Endothelial cell of umbilical vein (primary cell): ENCODE measurements at regions of chr22 and their contacts with region 1.

Region 1: GRCh38 chr22:49930739-49931412 is 12.4 kb downstream of the CRELD2 start:
- DNase-seq: peak; percentile 96
- H3K4me3 ChIP-seq: no peak overlapping the region
- H3K27ac ChIP-seq: peak overlapping the region; percentile 74
- H3K4me1 ChIP-seq: peaks cover 39% of the 10 kb centered on the region
- H3K27me3 ChIP-seq: no peaks in the 10 kb centered on the region
- CTCF ChIP-seq: peak; percentile 66 to 75
- POLR2A ChIP-seq: peak; percentile 57

Region 2: DNA sequence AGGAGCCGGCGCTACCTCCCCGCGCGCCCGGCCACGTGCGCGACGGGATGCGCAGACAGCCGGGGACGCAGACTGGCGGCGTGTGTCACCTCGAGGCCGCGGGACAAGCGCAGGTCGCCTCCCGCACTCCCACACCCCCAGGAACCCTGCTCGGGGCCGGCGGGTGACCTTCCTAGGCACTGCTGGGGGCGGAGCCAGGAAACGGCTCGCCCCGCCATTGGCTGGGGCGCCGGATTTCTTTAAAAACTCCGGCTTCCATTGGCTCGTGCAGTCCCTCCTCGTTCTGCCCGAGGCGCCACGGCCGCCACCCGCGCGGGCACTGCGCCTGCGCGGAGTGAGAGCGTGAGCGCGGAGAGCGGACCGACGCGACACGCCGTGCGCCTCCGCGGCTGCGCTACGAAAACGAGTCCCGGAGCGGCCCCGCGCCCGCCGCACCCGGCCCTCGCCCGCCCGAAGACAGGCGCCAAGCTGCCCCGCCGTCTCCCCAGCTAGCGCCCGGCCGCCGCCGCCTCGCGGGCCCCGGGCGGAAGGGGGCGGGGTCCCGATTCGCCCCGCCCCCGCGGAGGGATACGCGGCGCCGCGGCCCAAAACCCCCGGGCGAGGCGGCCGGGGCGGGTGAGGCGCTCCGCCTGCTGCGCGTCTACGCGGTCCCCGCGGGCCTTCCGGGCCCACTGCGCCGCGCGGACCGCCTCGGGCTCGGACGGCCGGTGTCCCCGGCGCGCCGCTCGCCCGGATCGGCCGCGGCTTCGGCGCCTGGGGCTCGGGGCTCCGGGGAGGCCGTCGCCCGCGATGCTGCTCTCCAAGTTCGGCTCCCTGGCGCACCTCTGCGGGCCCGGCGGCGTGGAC is 29.5 kb after region 1 on chr22 and contains the start of gene PIM3:
- CTCF ChIA-PET with region 1: interaction called, 32 read pairs
- POLR2A ChIA-PET with region 1: interaction called, 14 read pairs
- dilution Hi-C with region 1: no loop called
- intact Hi-C with region 1: loop called (anchors 1 kb)
- DNase-seq: peak; percentile 97
- H3K4me3 ChIP-seq: peak within 1 kb of the TSS; percentile 52 to 80 (median 59)
- H3K27ac ChIP-seq: peak within 1 kb of the TSS; percentile 80
- H3K4me1 ChIP-seq: peaks cover 25% of the 10 kb centered on the region
- H3K27me3 ChIP-seq: no peaks in the 10 kb centered on the region
- CTCF ChIP-seq: no peak
- POLR2A ChIP-seq: peak; percentile 96
- total RNA-seq, gene PIM3: 185 and 219 TPM in 2 replicates

Region 3: GRCh38 chr22:49970528-49971231 is 39.8 kb after region 1 on chr22:
- CTCF ChIA-PET with region 1: interaction called, 10 read pairs
- POLR2A ChIA-PET with region 1: no interaction called
- dilution Hi-C with region 1: no loop called
- intact Hi-C with region 1: loop called (anchors 1 kb)
- DNase-seq: peak; percentile 96
- H3K4me3 ChIP-seq: peak overlapping the region; percentile 12 to 42 (median 24)
- H3K27ac ChIP-seq: peak overlapping the region; percentile 54
- H3K4me1 ChIP-seq: peaks cover 8% of the 10 kb centered on the region
- H3K27me3 ChIP-seq: no peaks in the 10 kb centered on the region
- CTCF ChIP-seq: no peak
- POLR2A ChIP-seq: peak; percentile 64

Region 4: DNA sequence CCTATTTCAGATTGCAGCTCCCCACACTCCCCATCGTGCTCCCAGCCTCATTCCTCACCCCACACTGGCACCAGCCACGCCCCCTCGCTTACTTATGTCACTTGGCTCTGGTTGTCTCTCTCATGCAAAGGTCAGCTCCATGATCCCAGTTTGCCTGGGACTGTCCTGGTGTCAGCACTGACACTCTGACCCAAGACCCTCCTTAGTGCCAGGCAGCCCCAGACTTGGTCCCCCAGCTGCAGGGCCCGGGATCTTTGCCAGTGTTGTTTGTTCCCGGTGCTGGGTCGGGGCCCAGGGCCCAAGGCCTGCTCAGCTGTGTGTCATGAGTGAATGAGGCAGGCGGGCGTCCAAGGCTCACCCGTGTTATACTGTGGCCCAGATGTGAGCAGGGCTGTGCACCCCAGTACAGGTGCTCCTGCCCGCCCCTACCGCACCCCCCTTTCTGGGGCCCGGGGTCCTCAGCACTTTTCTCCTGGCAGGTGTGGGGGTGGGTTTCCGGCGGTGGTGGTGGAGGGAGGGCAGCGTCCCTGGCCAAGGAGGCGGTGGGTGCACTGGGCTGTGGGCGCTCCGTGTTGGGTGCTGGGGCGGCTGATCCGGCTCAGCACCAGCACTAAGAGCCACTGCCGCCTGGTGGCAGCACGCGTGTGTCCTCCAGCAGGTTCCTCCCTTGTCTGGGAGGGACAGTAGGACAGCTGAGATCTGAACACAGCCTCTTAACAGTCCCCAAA is 62.2 kb after region 1 on chr22:
- CTCF ChIA-PET with region 1: interaction called, 19 read pairs
- POLR2A ChIA-PET with region 1: no interaction called
- dilution Hi-C with region 1: no loop called
- intact Hi-C with region 1: loop called (anchors 1 kb)
- DNase-seq: peak; percentile 43
- H3K4me3 ChIP-seq: no peak overlapping the region
- H3K27ac ChIP-seq: no peak overlapping the region
- H3K4me1 ChIP-seq: no peaks in the 10 kb centered on the region
- H3K27me3 ChIP-seq: peaks cover 0 to 1% of the 10 kb centered on the region in 2 experiments
- CTCF ChIP-seq: peak; percentile 72 to 84
- POLR2A ChIP-seq: no peak

Region 5: DNA sequence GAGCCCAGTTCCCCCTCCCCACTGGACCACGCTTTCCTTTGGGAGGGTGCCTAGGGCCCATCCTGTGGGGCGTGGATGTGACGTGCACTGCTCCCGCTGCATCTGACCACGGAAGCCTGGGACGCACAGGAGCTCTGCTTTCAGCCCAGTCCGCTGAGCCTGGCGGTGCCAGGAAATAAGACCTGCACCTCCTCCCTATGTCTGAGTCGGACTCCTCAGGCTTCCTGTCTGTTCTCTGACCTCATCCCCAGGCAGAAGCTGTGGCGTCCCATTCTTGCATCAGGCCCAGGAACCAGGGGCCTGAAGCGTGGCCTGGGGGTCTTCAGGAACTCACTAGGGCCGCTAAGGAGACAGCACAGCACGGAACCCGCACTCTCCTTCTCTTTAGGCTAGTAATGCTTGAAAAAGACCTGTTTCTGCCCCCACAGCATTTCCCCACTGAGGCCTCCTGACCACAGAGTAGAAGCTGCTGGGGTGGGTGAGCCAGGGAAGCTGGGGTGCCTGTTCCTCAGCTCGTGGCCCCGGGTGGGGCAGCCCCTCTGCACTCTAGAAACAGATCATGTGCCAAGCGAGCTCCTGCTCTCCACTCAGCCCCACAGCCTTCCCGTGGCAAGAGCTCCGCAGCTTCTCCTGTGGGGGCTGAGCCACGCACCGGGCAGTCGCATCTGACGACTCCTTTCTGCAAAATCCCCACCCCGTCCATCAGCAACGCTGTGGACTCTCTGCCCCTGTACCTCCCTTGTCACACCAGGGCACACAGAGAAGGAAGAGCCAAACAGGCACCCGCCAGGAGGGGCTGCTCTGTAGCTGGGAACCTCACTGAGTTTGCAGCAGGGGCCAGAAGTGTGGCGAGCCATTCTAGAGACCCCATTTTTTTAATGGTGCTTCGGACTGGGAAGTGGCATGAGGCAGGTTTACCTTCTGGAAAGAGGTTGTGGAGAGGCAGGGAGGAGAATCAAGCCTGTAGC is 181.6 kb after region 1 on chr22:
- CTCF ChIA-PET with region 1: interaction called, 7 read pairs
- POLR2A ChIA-PET with region 1: no interaction called
- dilution Hi-C with region 1: no loop called
- intact Hi-C with region 1: loop called (anchors 1 kb)
- DNase-seq: peak; percentile 90
- H3K4me3 ChIP-seq: no peak overlapping the region
- H3K27ac ChIP-seq: peak overlapping the region; percentile 96
- H3K4me1 ChIP-seq: peaks cover 47% of the 10 kb centered on the region
- H3K27me3 ChIP-seq: no peaks in the 10 kb centered on the region
- CTCF ChIP-seq: no peak
- POLR2A ChIP-seq: peak; percentile 56

Region 6: GRCh38 chr22:50209893-50210292 is 279.0 kb after region 1 on chr22:
- CTCF ChIA-PET with region 1: interaction called, 6 read pairs
- POLR2A ChIA-PET with region 1: no interaction called
- dilution Hi-C with region 1: no loop called
- intact Hi-C with region 1: loop called (anchors 1 kb)
- DNase-seq: peak; percentile 56
- H3K4me3 ChIP-seq: no peak overlapping the region
- H3K27ac ChIP-seq: no peak overlapping the region
- H3K4me1 ChIP-seq: peaks cover 13% of the 10 kb centered on the region
- H3K27me3 ChIP-seq: no peaks in the 10 kb centered on the region
- CTCF ChIP-seq: peak; percentile 84 to 87
- POLR2A ChIP-seq: no peak